PC-3 (cell line): ENCODE measurements at regions of chr2 and their contacts with region 1.

Region 1: DNA sequence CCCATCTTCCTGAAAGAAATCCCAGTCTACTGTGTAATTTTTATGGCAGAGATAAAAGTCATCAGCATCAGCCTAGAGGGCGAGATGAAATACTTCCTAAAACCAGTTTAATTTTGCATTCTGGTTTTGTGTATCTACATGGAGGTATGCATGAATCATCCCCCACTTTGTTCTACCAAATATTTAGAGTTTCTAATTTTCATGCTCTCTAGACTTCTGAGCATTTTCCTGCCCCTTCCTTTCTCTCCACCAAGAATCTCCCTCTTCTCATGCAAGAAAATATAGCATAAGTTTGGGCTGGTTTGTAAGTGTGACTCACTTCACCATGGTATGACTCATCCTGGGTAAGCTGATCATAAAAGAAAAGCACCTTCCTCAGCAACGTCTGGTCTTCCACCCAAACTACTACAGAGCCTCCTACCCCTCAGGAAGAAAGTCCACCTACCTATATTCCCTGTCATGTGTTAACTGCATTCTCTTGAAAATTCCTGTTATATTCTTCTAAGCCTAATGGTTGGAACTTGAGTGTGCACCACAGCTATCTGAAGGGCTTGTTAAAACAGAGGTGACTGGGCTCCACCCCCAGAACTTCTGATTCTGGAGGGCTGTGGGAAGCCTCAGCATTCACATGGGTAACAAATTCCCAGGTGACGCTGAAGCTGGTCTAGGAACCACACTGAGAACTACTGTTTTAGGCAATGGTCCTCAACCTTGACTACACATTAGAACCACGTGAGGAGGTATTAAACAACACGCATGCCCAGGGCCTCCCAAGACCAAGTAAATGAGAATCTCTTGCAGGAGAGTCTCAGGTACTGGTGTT is 37.4 kb upstream of the RAPGEF4 start:
- DNase-seq: peak; percentile 92
- ATAC-seq: peak; percentile 84
- H3K4me3 ChIP-seq: no peak overlapping the region
- H3K27ac ChIP-seq: peak overlapping the region; percentile 95
- H3K4me1 ChIP-seq: peaks cover 60% of the 10 kb centered on the region
- H3K27me3 ChIP-seq: no peaks in the 10 kb centered on the region
- CTCF ChIP-seq: no peak

Region 2: DNA sequence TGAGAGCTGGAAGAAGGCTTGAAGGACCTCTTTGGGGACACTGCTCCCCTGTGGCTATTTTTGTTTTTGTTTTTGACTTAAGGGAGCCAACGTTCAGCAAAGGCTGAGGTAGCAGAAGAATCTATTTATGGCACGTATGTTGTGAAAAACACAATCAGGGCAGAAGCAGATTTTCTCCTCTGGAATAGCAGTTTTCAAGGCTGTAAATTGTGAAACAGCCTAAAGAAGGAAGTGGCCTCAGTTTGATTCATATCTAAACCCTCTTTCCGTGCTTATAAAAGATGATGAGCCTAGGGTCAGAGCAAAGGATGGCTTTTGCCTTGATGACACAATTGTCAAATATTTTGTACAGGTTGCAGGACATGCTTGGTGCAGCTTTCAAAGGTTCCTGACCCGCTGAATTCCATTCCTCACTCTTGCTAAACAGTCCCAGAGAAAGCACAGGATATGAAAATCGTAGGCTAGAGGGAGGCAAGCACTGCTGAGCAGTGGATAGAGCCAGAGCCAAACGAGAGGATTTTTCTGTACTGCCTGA is 489.4 kb before region 1 on chr2:
- CTCF ChIA-PET with region 1: no interaction called
- POLR2A ChIA-PET with region 1: no interaction called
- intact Hi-C with region 1: no loop called
- DNase-seq: peak; percentile 74
- ATAC-seq: peak; percentile 58
- H3K4me3 ChIP-seq: no peak overlapping the region
- H3K27ac ChIP-seq: no peak overlapping the region
- H3K4me1 ChIP-seq: peaks cover 14% of the 10 kb centered on the region
- H3K27me3 ChIP-seq: no peaks in the 10 kb centered on the region
- CTCF ChIP-seq: no peak

Region 3: GRCh38 chr2:172623249-172623965 is 74.8 kb before region 1 on chr2:
- CTCF ChIA-PET with region 1: no interaction called
- POLR2A ChIA-PET with region 1: no interaction called
- intact Hi-C with region 1: loop called (anchors 1 kb)
- DNase-seq: no peak
- ATAC-seq: peak; percentile 48
- H3K4me3 ChIP-seq: no peak overlapping the region
- H3K27ac ChIP-seq: peak overlapping the region; percentile 19
- H3K4me1 ChIP-seq: no peaks in the 10 kb centered on the region
- H3K27me3 ChIP-seq: no peaks in the 10 kb centered on the region
- CTCF ChIP-seq: no peak

Region 4: DNA sequence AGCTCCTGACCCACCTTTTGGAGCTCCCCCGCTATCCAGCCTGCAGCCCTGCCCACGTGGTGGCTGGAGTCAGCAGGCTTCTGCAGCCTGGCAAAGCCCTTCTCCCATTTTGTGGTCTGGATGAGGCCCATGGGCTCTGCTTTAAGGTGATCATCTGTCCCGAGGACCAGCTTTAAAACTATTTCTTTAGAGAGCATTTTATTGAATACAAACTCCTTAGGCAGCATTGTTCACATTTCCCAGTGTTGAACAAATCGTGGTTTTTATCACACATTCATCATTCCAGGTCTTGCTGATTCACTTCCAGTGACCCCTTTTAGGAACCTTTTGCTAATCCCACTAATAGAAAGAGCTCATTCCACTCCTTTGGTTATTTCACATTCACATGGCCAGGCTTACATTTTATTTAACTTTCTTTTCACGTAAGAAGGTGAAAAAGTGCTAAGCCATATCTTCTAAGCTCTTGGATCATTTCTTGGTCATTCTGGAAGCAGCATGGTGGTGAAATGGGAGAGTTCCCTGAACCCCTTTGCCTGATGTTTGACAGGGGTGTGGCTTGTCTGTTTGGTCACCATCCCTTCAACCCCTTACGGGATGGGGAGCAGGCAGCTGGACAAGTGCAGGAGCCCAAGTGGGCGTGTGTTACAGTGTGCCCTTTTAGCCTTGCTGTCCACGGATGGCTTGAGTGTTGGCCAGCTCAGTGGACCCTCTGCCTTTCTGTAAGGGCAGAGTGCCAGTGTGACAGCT is 43.0 kb before region 1 on chr2:
- CTCF ChIA-PET with region 1: no interaction called
- POLR2A ChIA-PET with region 1: no interaction called
- intact Hi-C with region 1: loop called (anchors 5 kb)
- DNase-seq: peak; percentile 94
- ATAC-seq: peak; percentile 84
- H3K4me3 ChIP-seq: peak overlapping the region; percentile 41
- H3K27ac ChIP-seq: peak overlapping the region; percentile 99
- H3K4me1 ChIP-seq: peaks cover 21% of the 10 kb centered on the region
- H3K27me3 ChIP-seq: no peaks in the 10 kb centered on the region
- CTCF ChIP-seq: no peak

Region 5: DNA sequence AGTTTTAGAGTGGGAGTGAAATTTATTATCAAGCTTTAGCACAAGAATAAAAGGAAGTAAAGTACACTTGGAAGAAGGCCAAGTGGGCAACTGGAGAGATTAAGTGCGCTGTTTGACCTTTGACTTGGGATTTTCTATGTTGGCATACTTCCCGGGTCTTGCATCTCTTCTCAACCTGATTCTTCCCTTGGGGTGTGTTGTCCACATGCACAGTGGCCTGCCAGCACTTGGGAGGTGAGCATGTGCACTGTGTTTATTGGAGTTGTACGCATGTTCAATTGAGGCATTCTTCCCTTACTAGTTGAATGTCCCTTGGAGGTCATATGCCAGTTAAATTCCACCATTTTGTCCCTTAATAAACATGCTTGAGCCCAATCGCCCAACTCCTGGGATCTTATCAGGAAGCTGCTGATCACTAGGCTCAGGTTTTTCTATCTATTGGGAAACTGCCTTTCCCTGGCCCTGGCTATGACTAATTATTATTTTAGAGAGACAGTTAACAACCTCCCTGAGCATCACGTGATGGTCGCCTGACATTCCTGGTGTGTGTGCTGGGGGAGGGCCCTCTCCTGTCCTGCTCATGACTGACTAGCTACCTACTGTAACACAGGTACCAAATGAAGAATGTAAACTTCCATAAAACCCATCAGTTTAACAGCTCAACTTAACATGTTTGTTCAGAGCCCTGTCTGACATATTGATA is 25.1 kb before region 1 on chr2:
- CTCF ChIA-PET with region 1: interaction called, 3 read pairs
- POLR2A ChIA-PET with region 1: no interaction called
- intact Hi-C with region 1: loop called (anchors 2 kb)
- DNase-seq: peak; percentile 60
- ATAC-seq: no peak
- H3K4me3 ChIP-seq: no peak overlapping the region
- H3K27ac ChIP-seq: peak overlapping the region; percentile 93
- H3K4me1 ChIP-seq: peaks cover 37% of the 10 kb centered on the region
- H3K27me3 ChIP-seq: no peaks in the 10 kb centered on the region
- CTCF ChIP-seq: no peak